Caco-2 (cell line): ENCODE measurements at regions of chr5 and their contacts with region 1.

Region 1: GRCh38 chr5:57383093-57383861 is 99.3 kb downstream of the ACTBL2 start:
- DNase-seq: peak; percentile 76 to 79
- H3K4me3 ChIP-seq: no peak overlapping the region
- H3K4me3 Mint-ChIP-seq: peak overlapping the region; percentile 16
- H3K27ac Mint-ChIP-seq: peak overlapping the region; percentile 60
- H3K4me1 ChIP-seq: peaks cover 20% of the 10 kb centered on the region
- H3K4me1 Mint-ChIP-seq: peaks cover 16% of the 10 kb centered on the region
- H3K27me3 ChIP-seq: no peaks in the 10 kb centered on the region
- H3K27me3 Mint-ChIP-seq: no peaks in the 10 kb centered on the region
- CTCF ChIP-seq: peak; percentile 24 to 41

Region 2: DNA sequence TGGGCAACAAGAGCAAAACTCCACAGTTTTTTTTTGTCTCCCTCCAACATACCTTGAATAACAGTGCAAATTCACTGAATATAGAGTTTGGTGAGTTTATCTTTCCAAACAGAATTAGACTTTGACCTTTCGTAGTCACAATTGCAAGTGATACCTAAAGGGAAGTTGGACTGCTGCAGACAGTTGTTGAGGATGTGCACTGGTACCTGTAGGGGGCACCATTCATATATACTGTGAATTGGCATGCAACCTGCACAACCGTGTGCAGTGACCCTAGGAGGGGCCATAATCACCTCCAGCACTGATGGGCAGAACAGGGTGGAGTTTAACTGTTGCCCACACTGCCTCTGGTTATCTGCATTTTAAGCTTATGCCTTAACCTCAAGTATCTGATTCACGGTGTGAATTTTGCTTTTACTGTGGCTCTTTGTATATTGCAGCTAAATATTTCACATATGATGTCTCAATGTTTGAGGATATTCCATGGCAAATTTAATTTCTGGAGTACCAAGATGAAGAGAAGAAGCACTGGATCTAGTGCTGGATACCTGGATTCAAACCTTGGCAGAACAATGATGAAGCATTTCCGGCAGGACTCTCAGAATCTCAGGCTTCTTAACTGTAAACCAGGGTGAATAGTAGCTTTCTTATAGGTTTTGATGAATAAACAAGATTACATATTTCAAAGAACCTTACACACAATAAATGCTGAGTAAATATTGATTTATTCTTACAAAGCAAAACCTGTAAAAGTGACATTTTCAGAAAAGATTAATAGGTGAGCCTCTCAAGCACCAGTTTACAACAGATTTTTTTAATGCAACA is 45.0 kb before region 1 on chr5:
- CTCF ChIA-PET with region 1: interaction called, 4 read pairs
- POLR2A ChIA-PET with region 1: no interaction called
- intact Hi-C with region 1: loop called (anchors 2 kb)
- DNase-seq: peak; percentile 54 to 58
- H3K4me3 ChIP-seq: no peak overlapping the region
- H3K4me3 Mint-ChIP-seq: peak overlapping the region; percentile 35
- H3K27ac Mint-ChIP-seq: peak overlapping the region; percentile 61
- H3K4me1 ChIP-seq: peaks cover 51% of the 10 kb centered on the region
- H3K4me1 Mint-ChIP-seq: peaks cover 17% of the 10 kb centered on the region
- H3K27me3 ChIP-seq: no peaks in the 10 kb centered on the region
- H3K27me3 Mint-ChIP-seq: no peaks in the 10 kb centered on the region
- CTCF ChIP-seq: peak; percentile 41 to 46

Region 3: DNA sequence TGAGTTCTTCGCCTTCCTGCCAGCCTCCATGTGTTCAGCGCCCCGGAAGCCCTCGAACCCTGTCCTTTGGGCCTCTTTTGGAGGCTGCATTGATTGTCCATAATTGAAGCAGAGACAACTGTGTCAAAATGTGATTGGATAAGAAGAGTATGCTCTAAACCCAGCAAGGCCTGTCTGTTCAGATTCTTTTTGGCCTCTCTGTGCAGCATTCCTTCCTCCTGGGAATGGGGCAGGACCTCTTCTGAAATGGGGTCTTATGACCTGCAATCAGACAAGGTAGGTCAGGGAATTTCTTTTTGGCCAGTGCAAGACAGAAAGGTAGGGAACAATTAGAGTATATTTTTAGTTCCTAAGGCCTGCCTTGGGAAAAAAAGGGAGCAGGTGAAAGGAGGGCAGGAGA is 12.5 kb after region 1 on chr5:
- CTCF ChIA-PET with region 1: no interaction called
- POLR2A ChIA-PET with region 1: no interaction called
- intact Hi-C with region 1: loop called (anchors 1 kb)
- DNase-seq: no peak
- H3K4me3 ChIP-seq: no peak overlapping the region
- H3K4me3 Mint-ChIP-seq: no peak overlapping the region
- H3K27ac Mint-ChIP-seq: no peak overlapping the region
- H3K4me1 ChIP-seq: no peaks in the 10 kb centered on the region
- H3K4me1 Mint-ChIP-seq: no peaks in the 10 kb centered on the region
- H3K27me3 ChIP-seq: no peaks in the 10 kb centered on the region
- H3K27me3 Mint-ChIP-seq: no peaks in the 10 kb centered on the region
- CTCF ChIP-seq: no peak